Naive thymus-derived CD8-positive, alpha-beta T cell (primary cell): ENCODE measurements at regions of chr9 and their contacts with region 1.

Region 1: GRCh38 chr9:113446323-113446740 is 17.2 kb upstream of the RGS3 start:
- DNase-seq: peak in 3 of 10 donors; percentile 50 to 57 (median 54)
- ATAC-seq: peak in 1 of 2 donors; percentile 25
- H3K4me3 Mint-ChIP-seq: no peak overlapping the region
- H3K27ac Mint-ChIP-seq: peak overlapping the region in 1 of 10 donors; percentile 4
- H3K4me1 Mint-ChIP-seq: peaks cover 0 to 3% (median 1%) of the 10 kb centered on the region in 4 donors
- H3K27me3 Mint-ChIP-seq: no peaks in the 10 kb centered on the region

Region 2: DNA sequence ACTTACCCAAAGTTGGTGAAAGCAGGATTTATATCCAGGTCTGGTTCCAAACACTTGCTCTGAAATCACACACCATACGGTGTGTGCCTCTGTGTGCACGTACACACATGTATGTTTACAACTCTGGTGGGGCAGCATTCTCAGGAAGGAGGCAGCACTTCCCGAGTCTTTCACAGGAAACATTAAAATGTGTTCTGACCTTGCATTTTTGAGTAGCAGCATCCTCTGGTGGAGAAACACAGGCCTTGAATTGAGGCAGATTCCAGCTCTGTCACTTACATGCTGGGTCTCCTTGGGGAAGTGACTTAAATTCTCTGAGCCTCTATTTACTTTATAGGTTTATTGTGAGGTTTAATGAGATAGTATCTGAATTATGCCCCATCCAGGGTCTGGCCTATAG is 143.6 kb after region 1 on chr9:
- POLR2A ChIA-PET with region 1: interaction called, 10 read pairs
- DNase-seq: peak in 3 of 10 donors; percentile 10 to 38 (median 28)
- ATAC-seq: peak; percentile 32 to 66
- H3K4me3 Mint-ChIP-seq: peak overlapping the region in 1 of 10 donors; percentile 42
- H3K27ac Mint-ChIP-seq: peak overlapping the region in 7 of 10 donors; percentile 31 to 85 (median 76)
- H3K4me1 Mint-ChIP-seq: peaks cover 13 to 55% (median 43%) of the 10 kb centered on the region in 4 donors
- H3K27me3 Mint-ChIP-seq: no peaks in the 10 kb centered on the region